T47D (cell line): ENCODE measurements at regions of chr12 and their contacts with region 1.

Region 1: GRCh38 chr12:89040146-89040964 is 311.9 kb downstream of the DUSP6 start:
- DNase-seq: no peak

Region 2: GRCh38 chr12:88615490-88615889 is 424.9 kb before region 1 on chr12:
- in situ Hi-C with region 1: no loop called
- DNase-seq: no peak

Region 3: GRCh38 chr12:89461649-89462612 is 421.6 kb after region 1 on chr12:
- in situ Hi-C with region 1: loop called (anchors 25 kb)
- DNase-seq: peak; percentile 28 to 85